ENCODE measurements at regions of chr12 and their contacts with region 1.

Region 1: GRCh38 chr12:4307593-4308333 is 13.2 kb upstream of the TIGAR start:
- DNase-seq: peak; percentile 82 to 83 (median 82)
- ATAC-seq: peak; percentile 96
- H3K4me3 ChIP-seq: no peak overlapping the region
- H3K4me1 ChIP-seq: peaks cover 14% of the 10 kb centered on the region
- CTCF ChIP-seq: peak; percentile 68

Region 2: DNA sequence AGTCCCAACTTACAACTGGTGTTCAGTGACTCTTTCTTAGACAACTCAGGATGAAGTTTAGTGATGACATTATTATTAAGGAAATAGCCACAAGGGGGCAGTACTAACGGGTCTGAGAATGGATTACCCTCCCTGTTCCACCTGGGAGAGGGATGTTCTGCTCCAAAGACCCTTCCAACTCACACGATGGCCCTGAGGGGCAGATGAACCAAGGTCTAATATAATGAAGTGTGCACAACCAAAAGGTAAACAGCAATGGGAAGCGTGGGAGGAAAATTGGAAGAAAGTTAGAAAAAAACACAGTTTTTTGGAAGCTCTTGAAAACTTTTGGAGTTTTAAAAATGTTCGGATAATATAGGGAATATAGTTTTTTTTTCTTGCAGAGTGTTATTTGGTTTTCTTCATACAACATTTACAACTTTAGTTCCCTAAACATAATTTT is 113.8 kb after region 1 on chr12:
- intact Hi-C with region 1: loop called in 1 of 2 experiments (anchors 10 kb)
- DNase-seq: peak in 1 of 3 donors; percentile 51
- ATAC-seq: peak; percentile 42
- H3K4me3 ChIP-seq: no peak overlapping the region
- H3K4me1 ChIP-seq: no peaks in the 10 kb centered on the region
- CTCF ChIP-seq: no peak